CD4-positive, alpha-beta memory T cell (primary cell): ENCODE measurements at regions of chr4 and their contacts with region 1.

Region 1: DNA sequence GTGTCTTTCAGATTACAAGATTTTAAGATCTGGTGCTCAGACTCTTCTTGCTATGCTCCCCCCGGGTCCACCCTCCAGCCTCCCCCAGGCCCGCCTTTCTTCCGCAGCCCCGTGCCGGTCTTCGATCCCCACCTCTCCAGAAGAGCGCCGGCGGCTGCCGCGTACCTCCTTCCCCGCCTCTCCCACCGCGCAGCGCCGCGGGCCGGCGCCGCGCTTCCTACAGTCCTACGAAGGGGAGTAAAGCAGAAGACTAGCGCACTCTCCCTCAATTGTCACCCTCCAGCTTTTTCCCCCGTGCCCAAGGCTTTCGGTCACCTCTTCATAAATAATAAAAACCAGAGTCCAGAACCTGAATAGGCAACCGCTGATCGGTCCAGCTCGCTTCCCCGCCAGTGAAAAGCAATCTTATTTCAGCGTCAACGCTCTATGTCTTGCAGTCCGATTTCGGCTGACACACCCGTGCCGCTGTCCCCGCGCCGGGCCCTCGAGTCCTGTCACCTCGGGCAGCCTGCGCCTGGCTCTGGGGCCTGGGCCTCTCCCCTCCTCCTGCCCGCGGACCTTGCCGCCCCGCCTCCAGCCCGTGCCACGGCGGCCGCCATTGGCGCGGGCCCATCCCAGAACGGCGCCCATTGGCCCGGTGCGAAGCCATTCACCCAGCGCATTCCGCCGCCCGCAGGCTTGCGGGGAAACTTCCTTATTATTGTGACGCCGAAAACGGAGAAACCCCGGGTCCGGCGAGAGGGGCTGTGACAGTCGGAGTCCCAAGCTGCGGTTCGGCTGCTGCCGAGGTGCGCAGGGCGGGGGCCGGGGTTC is at the start of gene HERC3:
- DNase-seq: peak; percentile 87 to 91 (median 90)
- H3K4me3 ChIP-seq: peak within 1 kb of the TSS; percentile 33 to 74
- H3K4me3 Mint-ChIP-seq: peak within 1 kb of the TSS; percentile 95 to 99 (median 98)
- H3K27ac ChIP-seq: peak within 1 kb of the TSS; percentile 89
- H3K27ac Mint-ChIP-seq: peak within 1 kb of the TSS; percentile 96 to 99 (median 99)
- H3K4me1 ChIP-seq: peaks cover 32% of the 10 kb centered on the region
- H3K4me1 Mint-ChIP-seq: peaks cover 29 to 54% (median 37%) of the 10 kb centered on the region in 4 donors
- H3K27me3 ChIP-seq: no peaks in the 10 kb centered on the region
- H3K27me3 Mint-ChIP-seq: no peaks in the 10 kb centered on the region
- total RNA-seq, gene HERC3: 95.5 to 97.1 TPM

Region 2: GRCh38 chr4:88378691-88379559 is 213.1 kb before region 1 on chr4 and contains the start of gene HERC6:
- CTCF ChIA-PET with region 1: no interaction called
- POLR2A ChIA-PET with region 1: interaction called, 5 read pairs
- intact Hi-C with region 1: loop called (anchors 5 kb)
- DNase-seq: peak; percentile 74 to 89 (median 80)
- H3K4me3 ChIP-seq: peak within 1 kb of the TSS; percentile 82 to 96
- H3K4me3 Mint-ChIP-seq: peak within 1 kb of the TSS; percentile 95 to 99 (median 97)
- H3K27ac ChIP-seq: peak within 1 kb of the TSS; percentile 86
- H3K27ac Mint-ChIP-seq: peak within 1 kb of the TSS; percentile 94 to 98 (median 97)
- H3K4me1 ChIP-seq: peaks cover 37% of the 10 kb centered on the region
- H3K4me1 Mint-ChIP-seq: peaks cover 37 to 54% (median 43%) of the 10 kb centered on the region in 4 donors
- H3K27me3 ChIP-seq: no peaks in the 10 kb centered on the region
- H3K27me3 Mint-ChIP-seq: no peaks in the 10 kb centered on the region
- total RNA-seq, gene HERC6: 26.8 to 29.5 TPM

Region 3: DNA sequence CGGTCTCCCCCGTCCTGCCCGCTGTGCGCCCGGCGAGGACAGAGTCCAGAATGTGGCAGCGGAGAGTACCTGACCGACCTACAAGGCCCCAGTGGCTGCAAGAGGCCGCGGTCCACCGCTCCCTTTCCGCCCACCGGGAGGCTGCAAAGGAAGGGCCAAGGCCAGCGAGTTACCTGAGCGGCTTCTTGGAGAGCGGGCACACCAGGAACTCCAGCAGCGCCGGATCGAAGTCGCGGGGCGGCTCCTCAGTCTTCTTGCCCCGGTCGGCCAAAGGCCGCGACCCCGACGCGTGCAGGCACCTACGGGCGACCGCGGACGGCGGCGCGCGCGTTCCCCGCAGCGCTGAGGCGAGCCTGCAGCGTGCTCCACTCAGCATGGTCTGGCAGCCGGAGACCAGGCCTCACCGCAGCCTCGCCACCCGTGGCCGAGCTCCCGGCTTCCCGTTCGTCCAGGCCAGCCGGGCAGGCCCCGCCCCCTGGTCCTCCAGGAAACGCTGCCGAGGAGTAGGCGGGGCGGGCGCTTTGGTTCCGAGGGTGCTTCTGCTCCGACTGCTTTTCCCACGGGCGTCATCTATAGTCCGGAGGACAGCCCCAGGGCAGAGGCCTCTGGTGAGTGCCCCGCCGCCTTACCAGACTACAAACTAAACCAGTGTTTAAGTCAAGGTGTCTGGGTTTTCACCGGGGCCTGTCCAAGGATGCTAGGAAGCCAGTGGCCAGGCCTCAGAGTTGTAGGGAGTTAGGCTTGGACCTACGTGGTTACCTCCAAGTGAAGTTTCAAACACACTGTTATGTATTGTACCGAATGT is 68.5 kb before region 1 on chr4 and contains the start of gene PYURF:
- CTCF ChIA-PET with region 1: no interaction called
- POLR2A ChIA-PET with region 1: no interaction called
- intact Hi-C with region 1: loop called (anchors 1 kb)
- DNase-seq: peak; percentile 60 to 73 (median 64)
- H3K4me3 ChIP-seq: peak within 1 kb of the TSS; percentile 62 to 69
- H3K4me3 Mint-ChIP-seq: peak within 1 kb of the TSS; percentile 91 to 97 (median 94)
- H3K27ac ChIP-seq: peak within 1 kb of the TSS; percentile 60
- H3K27ac Mint-ChIP-seq: peak within 1 kb of the TSS; percentile 89 to 96 (median 93)
- H3K4me1 ChIP-seq: peaks cover 17% of the 10 kb centered on the region
- H3K4me1 Mint-ChIP-seq: peaks cover 22 to 46% (median 32%) of the 10 kb centered on the region in 4 donors
- H3K27me3 ChIP-seq: no peaks in the 10 kb centered on the region
- H3K27me3 Mint-ChIP-seq: no peaks in the 10 kb centered on the region
- total RNA-seq, gene PYURF: 54.5 to 60.4 TPM

Region 4: GRCh38 chr4:88613417-88613875 is 21.5 kb after region 1 on chr4:
- CTCF ChIA-PET with region 1: interaction called, 53 read pairs
- POLR2A ChIA-PET with region 1: interaction called, 163 read pairs
- intact Hi-C with region 1: loop called (anchors 1 kb)
- DNase-seq: peak; percentile 76 to 87 (median 84)
- H3K4me3 ChIP-seq: peak overlapping the region in 1 of 2 donors; percentile 43
- H3K4me3 Mint-ChIP-seq: peak overlapping the region; percentile 69 to 88 (median 79)
- H3K27ac ChIP-seq: peak overlapping the region; percentile 62
- H3K27ac Mint-ChIP-seq: peak overlapping the region; percentile 93 to 99 (median 97)
- H3K4me1 ChIP-seq: peaks cover 67% of the 10 kb centered on the region
- H3K4me1 Mint-ChIP-seq: peaks cover 65 to 91% (median 77%) of the 10 kb centered on the region in 4 donors
- H3K27me3 ChIP-seq: no peaks in the 10 kb centered on the region
- H3K27me3 Mint-ChIP-seq: no peaks in the 10 kb centered on the region

Region 5: DNA sequence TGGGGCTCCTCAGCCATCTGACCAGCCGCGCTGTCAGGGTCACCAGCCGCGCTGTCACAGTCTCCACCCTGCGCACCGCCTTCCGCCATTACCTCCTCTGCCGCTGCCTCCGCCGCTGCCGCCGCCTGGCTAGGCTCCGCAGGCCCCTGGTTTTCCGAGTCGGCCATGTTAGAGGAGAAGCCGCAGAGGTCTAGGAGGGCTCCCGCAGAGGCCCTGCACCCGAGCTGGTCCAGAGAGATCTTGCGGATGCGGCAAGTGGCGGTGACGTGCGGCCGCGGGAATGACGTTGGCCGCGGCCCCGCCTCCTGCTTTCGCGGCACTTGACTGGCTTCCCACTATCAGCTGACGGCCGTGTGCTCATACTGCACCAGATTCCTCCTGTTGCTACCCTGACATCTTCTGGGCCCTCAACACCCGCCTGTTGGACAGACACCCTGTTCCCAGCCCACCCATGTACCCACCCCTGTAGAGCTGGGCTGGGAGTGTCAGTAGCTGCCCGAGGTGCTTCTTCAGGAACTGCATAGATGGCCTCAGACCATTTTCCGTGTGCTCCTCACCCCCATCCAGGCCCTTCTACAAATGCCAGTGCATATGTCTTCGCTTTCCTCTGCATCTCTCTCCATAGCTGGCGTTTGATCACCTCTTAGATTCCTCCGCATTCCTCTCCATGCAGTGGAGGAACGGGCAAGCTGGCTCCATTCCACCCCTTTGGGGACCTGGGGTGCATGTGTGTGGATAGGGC is 105.8 kb after region 1 on chr4 and contains the start of gene NAP1L5:
- CTCF ChIA-PET with region 1: interaction called, 3 read pairs
- POLR2A ChIA-PET with region 1: no interaction called
- intact Hi-C with region 1: loop called (anchors 5 kb)
- DNase-seq: peak; percentile 79 to 86 (median 85)
- H3K4me3 ChIP-seq: peak within 1 kb of the TSS; percentile 58 to 61
- H3K4me3 Mint-ChIP-seq: peak within 1 kb of the TSS; percentile 80 to 95 (median 90)
- H3K27ac ChIP-seq: peak within 1 kb of the TSS; percentile 62
- H3K27ac Mint-ChIP-seq: peak within 1 kb of the TSS; percentile 92 to 96 (median 94)
- H3K4me1 ChIP-seq: peaks cover 11% of the 10 kb centered on the region
- H3K4me1 Mint-ChIP-seq: peaks cover 9 to 25% (median 18%) of the 10 kb centered on the region in 4 donors
- H3K27me3 ChIP-seq: no peaks in the 10 kb centered on the region
- H3K27me3 Mint-ChIP-seq: no peaks in the 10 kb centered on the region
- total RNA-seq, gene NAP1L5: 1.2 to 1.6 TPM

Region 6: DNA sequence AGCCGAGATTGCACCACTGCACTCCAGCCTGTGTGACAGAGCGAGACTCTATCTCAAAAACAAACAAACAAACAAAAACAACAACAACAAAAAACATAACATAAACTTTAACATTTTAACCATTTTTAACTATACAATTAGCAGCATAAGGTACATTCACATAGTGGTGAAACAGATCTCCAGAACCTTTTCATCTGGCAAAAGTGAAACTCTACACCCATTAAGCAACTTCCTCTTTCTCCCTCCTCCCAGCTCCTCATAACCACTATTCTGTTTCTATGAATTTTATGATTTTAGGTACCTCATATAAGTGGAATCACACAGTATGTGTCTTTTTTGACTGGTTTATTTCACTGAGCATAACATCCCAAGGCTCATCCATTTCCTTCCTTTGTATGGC is 361.4 kb after region 1 on chr4:
- CTCF ChIA-PET with region 1: no interaction called
- POLR2A ChIA-PET with region 1: no interaction called
- intact Hi-C with region 1: no loop called
- DNase-seq: no peak
- H3K4me3 ChIP-seq: no peak overlapping the region
- H3K4me3 Mint-ChIP-seq: peak overlapping the region in 1 of 8 donors; percentile 55
- H3K27ac ChIP-seq: no peak overlapping the region
- H3K27ac Mint-ChIP-seq: peak overlapping the region in 4 of 7 donors; percentile 9 to 91 (median 80)
- H3K4me1 ChIP-seq: peaks cover 13% of the 10 kb centered on the region
- H3K4me1 Mint-ChIP-seq: peaks cover 6 to 12% (median 9%) of the 10 kb centered on the region in 4 donors
- H3K27me3 ChIP-seq: no peaks in the 10 kb centered on the region
- H3K27me3 Mint-ChIP-seq: peaks cover 0 to 1% of the 10 kb centered on the region in 2 donors